ENCODE measurements at regions of chr17 and their contacts with region 1.

Region 1: GRCh38 chr17:29640413-29640812 is 17.7 kb upstream of the CORO6 start:
- DNase-seq: no peak
- ATAC-seq: no peak
- H3K4me3 ChIP-seq: no peak overlapping the region
- H3K27ac ChIP-seq: no peak overlapping the region
- H3K4me1 ChIP-seq: peaks cover 11 to 18% of the 10 kb centered on the region in 2 experiments
- H3K27me3 ChIP-seq: no peaks in the 10 kb centered on the region
- CTCF ChIP-seq: no peak
- POLR2A ChIP-seq: no peak
- RAD21 ChIP-seq: no peak

Region 2: GRCh38 chr17:29549177-29549923 is 91.1 kb before region 1 on chr17:
- CTCF ChIA-PET with region 1: no interaction called
- POLR2A ChIA-PET with region 1: no interaction called
- RAD21 ChIA-PET with region 1: no interaction called
- intact Hi-C with region 1: no loop called
- DNase-seq: no peak
- ATAC-seq: no peak
- H3K4me3 ChIP-seq: no peak overlapping the region
- H3K27ac ChIP-seq: no peak overlapping the region
- H3K4me1 ChIP-seq: no peaks in the 10 kb centered on the region
- H3K27me3 ChIP-seq: no peaks in the 10 kb centered on the region
- CTCF ChIP-seq: no peak
- POLR2A ChIP-seq: no peak
- RAD21 ChIP-seq: no peak

Region 3: DNA sequence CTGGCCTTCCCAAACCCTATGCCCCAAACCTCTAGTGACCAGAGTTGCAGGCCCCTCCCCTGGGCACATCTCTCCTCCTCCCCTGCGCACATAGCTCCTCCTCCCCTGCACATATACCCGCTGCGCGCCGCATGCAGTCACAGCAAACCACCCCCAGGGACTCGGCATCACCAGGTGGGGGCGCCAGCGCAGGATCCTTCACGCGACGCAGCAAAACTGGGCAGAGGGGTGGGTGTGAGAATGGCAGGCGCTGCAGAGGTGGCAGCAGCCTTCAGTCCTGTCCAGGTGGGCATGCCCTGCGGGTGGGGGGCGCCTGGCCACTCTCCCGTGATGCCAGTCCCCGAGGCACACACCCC is 23.3 kb before region 1 on chr17:
- CTCF ChIA-PET with region 1: interaction called, 29 read pairs
- POLR2A ChIA-PET with region 1: no interaction called
- RAD21 ChIA-PET with region 1: interaction called, 5 to 7 read pairs
- intact Hi-C with region 1: no loop called
- DNase-seq: peak; percentile 67
- ATAC-seq: peak; percentile 81
- H3K4me3 ChIP-seq: peak overlapping the region; percentile 36 to 50
- H3K27ac ChIP-seq: peak overlapping the region; percentile 64; the same call in 1 of the 2 replicates
- H3K4me1 ChIP-seq: peaks cover 48 to 64% of the 10 kb centered on the region in 2 experiments
- H3K27me3 ChIP-seq: no peaks in the 10 kb centered on the region
- CTCF ChIP-seq: peak; percentile 62 to 91 (median 84)
- POLR2A ChIP-seq: peak; percentile 30
- RAD21 ChIP-seq: peak; percentile 39; the same call in 1 of the 2 replicates

Region 4: DNA sequence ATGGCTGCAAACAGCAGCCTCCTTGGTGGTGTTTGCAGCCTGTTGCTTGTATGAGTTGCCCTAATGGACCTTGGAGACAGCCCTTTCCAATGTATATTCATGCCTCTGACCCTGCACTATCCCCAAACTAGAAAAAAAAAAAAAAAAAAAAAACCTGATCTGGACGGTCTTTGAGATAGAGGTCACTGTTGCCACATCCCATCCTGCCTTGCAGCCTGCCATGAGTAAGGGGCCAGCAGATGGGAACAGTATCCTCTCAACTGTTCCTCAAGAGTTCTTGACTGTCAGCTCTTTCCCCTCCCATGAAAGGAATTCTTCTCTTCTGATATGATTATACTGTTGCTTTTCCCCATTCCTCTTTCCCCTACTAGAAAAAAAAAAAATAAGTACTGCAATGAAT is 137.2 kb after region 1 on chr17:
- CTCF ChIA-PET with region 1: interaction called, 63 read pairs
- POLR2A ChIA-PET with region 1: no interaction called
- RAD21 ChIA-PET with region 1: interaction called, 15 to 18 read pairs
- intact Hi-C with region 1: loop called (anchors 1 kb)
- DNase-seq: no peak
- ATAC-seq: no peak
- H3K4me3 ChIP-seq: no peak overlapping the region
- H3K27ac ChIP-seq: no peak overlapping the region
- H3K4me1 ChIP-seq: no peaks in the 10 kb centered on the region
- H3K27me3 ChIP-seq: no peaks in the 10 kb centered on the region
- CTCF ChIP-seq: no peak
- POLR2A ChIP-seq: no peak
- RAD21 ChIP-seq: no peak

Region 5: DNA sequence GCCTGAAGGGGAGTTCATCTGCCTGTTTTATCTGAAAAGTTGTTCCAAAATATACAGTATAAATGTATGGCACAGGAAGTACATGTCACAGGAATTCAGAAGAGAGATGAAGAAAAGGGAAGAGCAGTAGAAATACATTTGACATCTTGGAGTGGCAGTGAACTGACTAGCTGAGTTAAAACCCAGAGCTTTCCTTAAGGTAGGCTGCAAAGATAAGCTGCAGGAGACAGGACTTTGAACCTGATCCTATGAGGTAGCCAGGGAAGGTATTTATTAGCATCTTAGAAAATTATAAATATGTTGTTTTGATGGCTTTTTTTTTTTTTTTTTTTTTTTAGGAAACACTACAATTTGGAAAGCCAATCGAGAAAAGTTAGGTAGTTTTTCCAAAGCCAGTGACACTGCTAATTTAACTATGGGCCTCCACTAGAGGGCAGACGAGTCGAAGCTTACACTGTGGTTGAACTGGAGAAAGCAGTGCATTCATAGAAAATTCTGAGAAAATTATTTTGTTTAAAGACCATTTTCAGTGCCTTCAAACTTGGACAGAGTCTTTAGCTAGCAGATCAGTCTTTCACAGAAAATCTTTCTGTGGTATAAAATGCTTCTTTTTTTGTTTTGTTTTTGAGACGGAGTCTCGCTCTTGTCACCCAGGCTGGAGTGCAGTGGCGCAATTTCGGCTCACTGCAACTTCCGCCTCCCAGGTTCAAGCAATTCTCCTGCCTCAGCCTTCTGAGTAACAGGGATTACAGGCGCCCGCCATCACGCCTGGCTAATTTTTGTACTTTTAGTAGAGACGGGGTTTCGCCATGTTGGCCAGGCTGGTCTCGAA is 167.3 kb after region 1 on chr17:
- CTCF ChIA-PET with region 1: interaction called, 36 read pairs
- POLR2A ChIA-PET with region 1: no interaction called
- RAD21 ChIA-PET with region 1: interaction called in 1 of 2 experiments, 4 read pairs
- intact Hi-C with region 1: loop called (anchors 1 kb)
- DNase-seq: peak; percentile 18
- ATAC-seq: peak; percentile 85
- H3K4me3 ChIP-seq: no peak overlapping the region
- H3K27ac ChIP-seq: no peak overlapping the region
- H3K4me1 ChIP-seq: peaks cover 0 to 6% of the 10 kb centered on the region in 2 experiments; a peak in 1 of 4 replicates
- H3K27me3 ChIP-seq: no peaks in the 10 kb centered on the region
- CTCF ChIP-seq: peak; percentile 67 to 79 (median 77)
- POLR2A ChIP-seq: no peak
- RAD21 ChIP-seq: peak; percentile 83

Region 6: GRCh38 chr17:30000001-30000754 is 359.8 kb after region 1 on chr17:
- CTCF ChIA-PET with region 1: interaction called, 4 read pairs
- POLR2A ChIA-PET with region 1: interaction called, 4 read pairs
- RAD21 ChIA-PET with region 1: no interaction called
- intact Hi-C with region 1: loop called (anchors 1 kb)
- DNase-seq: no peak
- ATAC-seq: peak; percentile 42; the same call in 1 of the 2 replicates
- H3K4me3 ChIP-seq: no peak overlapping the region
- H3K27ac ChIP-seq: no peak overlapping the region
- H3K4me1 ChIP-seq: no peaks in the 10 kb centered on the region
- H3K27me3 ChIP-seq: no peaks in the 10 kb centered on the region
- CTCF ChIP-seq: peak in 2 of 3 experiments; percentile 22 to 30; a peak in 1 of 6 replicates
- POLR2A ChIP-seq: no peak
- RAD21 ChIP-seq: peak; percentile 50; the same call in 1 of the 2 replicates

Region 7: DNA sequence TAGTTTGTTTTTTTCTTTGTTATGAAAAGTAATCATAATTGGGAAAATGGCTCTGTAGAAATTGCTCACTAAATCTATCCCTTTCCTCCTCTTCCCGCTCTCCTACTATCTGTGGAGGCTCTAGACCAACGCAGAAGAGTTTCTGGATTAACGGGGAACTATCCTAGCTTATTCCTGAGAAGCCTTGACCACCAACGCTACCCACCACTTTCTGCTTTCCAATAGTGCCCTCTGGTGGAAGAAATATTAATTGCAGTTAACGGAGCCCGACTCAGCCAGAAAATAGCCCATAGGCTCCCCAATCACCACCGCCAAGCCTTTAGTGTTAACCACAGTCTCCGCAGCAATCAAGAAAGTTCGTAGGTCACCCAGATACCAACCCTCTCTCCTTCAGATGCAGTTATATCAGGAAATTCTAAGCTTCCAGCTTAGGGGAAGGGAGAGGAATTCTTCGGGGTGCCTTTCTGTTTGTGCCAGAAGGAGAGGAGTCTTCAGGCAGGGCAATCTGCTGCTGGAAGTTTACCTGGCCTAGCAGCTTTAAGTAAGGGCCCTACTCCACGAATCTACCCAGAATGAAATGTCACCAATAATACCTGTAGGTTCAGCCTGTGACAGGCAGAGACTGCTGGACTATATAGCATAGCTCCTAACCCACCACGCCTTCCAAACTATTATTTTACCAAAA is 453.2 kb after region 1 on chr17:
- CTCF ChIA-PET with region 1: interaction called, 79 read pairs
- POLR2A ChIA-PET with region 1: interaction called, 3 read pairs
- RAD21 ChIA-PET with region 1: interaction called, 5 to 7 read pairs
- intact Hi-C with region 1: loop called (anchors 1 kb)
- DNase-seq: peak; percentile 54
- ATAC-seq: peak; percentile 86
- H3K4me3 ChIP-seq: no peak overlapping the region
- H3K27ac ChIP-seq: no peak overlapping the region
- H3K4me1 ChIP-seq: peaks cover 0 to 32% of the 10 kb centered on the region in 2 experiments; a peak in 2 of 4 replicates
- H3K27me3 ChIP-seq: no peaks in the 10 kb centered on the region
- CTCF ChIP-seq: peak; percentile 62 to 91 (median 85)
- POLR2A ChIP-seq: no peak
- RAD21 ChIP-seq: peak; percentile 93

Region 8: GRCh38 chr17:30605027-30605426 is 964.6 kb after region 1 on chr17:
- CTCF ChIA-PET with region 1: no interaction called
- POLR2A ChIA-PET with region 1: no interaction called
- RAD21 ChIA-PET with region 1: no interaction called
- intact Hi-C with region 1: no loop called
- DNase-seq: no peak
- ATAC-seq: no peak
- H3K4me3 ChIP-seq: no peak overlapping the region
- H3K27ac ChIP-seq: no peak overlapping the region
- H3K4me1 ChIP-seq: peaks cover 3 to 4% of the 10 kb centered on the region in 2 experiments; a peak in 3 of 4 replicates
- H3K27me3 ChIP-seq: no peaks in the 10 kb centered on the region
- CTCF ChIP-seq: no peak
- POLR2A ChIP-seq: no peak
- RAD21 ChIP-seq: no peak

Measured in HCT116 (cell line).